Activated CD8-positive, alpha-beta memory T cell treated with anti-CD3 and anti-CD28 coated beads, Interleukin-2, amount 10 ng/mL, durations not matched to agents 7 days and 5 days (primary cell): ENCODE measurements at regions of chr2 and their contacts with region 1.

Region 1: DNA sequence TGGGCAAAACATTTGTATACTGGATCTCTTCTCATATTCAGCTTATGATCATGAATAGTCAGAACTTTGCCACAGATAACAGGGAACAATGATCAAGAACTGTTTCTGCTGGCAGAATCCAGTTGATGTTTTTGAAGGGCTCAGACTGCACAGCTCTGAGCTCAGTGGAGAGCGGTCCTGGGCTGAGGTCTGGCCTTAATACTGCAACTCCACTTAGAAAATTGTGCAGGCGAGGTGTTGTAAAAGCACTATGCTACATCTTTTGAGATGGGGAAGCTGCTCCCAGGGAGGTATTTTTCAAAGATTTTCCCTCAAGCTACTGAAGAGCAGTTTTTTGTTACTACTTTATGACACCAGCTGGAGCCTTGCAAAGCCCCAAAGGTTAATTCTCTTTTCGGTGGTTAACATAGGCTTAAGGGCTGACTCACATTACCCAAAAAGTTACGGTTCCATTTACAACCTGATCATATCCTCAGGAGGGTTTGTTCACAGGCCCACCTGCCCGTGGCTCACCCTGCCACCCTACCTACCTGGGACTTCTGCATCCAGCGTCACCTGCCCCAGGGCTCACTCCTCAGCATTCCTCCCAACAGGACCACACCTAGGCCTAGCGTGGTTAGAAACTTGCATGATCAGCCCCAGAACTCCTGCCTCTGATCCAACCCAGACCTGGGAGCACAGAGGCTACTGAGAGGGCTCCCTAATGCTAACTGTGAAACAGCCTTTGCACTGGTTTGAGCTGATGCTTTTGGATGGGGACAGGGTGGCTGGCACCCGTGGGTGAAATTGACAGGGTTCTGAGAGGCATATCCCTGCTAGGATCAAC is 114.4 kb downstream of the NCK2 start:
- DNase-seq: peak; percentile 42
- ATAC-seq: peak; percentile 62
- H3K4me3 Mint-ChIP-seq: peak overlapping the region; percentile 26
- H3K27ac Mint-ChIP-seq: peak overlapping the region; percentile 88
- H3K4me1 Mint-ChIP-seq: peaks cover 86% of the 10 kb centered on the region
- H3K27me3 Mint-ChIP-seq: no peaks in the 10 kb centered on the region

Region 2: GRCh38 chr2:105797298-105797819 is 61.7 kb before region 1 on chr2:
- CTCF ChIA-PET with region 1: interaction called, 26 read pairs
- DNase-seq: peak; percentile 85
- ATAC-seq: peak; percentile 55
- H3K4me3 Mint-ChIP-seq: peak overlapping the region; percentile 65
- H3K27ac Mint-ChIP-seq: peak overlapping the region; percentile 98
- H3K4me1 Mint-ChIP-seq: peaks cover 92% of the 10 kb centered on the region
- H3K27me3 Mint-ChIP-seq: no peaks in the 10 kb centered on the region